Ovary (tissue), 10 donors: ENCODE measurements at regions of chr5 and their contacts with region 1.

Region 1: GRCh38 chr5:62315376-62316175 is 9.6 kb downstream of the KIF2A start:
- DNase-seq: no peak
- H3K4me3 ChIP-seq: no peak overlapping the region
- H3K27ac ChIP-seq: no peak overlapping the region
- H3K4me1 ChIP-seq: no peaks in the 10 kb centered on the region
- H3K27me3 ChIP-seq: no peaks in the 10 kb centered on the region
- CTCF ChIP-seq: no peak
- EP300 ChIP-seq: no peak
- POLR2A ChIP-seq: no peak

Region 2: DNA sequence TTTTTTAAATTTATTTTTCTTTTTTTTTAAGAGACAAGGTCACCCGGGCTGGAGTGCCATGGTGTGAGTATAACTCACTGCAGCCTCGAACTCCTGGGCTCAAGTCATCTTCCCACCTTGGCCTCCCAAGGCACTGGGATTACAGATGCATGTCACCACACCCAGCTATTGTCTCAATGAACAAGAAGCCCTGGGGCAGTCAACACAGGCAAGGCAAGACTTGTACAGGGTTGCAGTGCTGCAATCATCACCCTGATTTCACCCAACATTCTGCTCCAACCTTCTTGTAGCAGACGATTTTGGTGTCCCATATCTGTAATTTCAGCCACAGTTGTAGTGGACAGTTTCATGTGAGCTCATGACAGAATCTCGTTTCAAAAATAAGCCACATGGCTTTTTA is 215.4 kb before region 1 on chr5:
- intact Hi-C with region 1: no loop called
- DNase-seq: no peak
- H3K4me3 ChIP-seq: no peak overlapping the region
- H3K27ac ChIP-seq: no peak overlapping the region
- H3K4me1 ChIP-seq: no peaks in the 10 kb centered on the region
- H3K27me3 ChIP-seq: no peaks in the 10 kb centered on the region
- CTCF ChIP-seq: no peak
- EP300 ChIP-seq: no peak
- POLR2A ChIP-seq: no peak

Region 3: DNA sequence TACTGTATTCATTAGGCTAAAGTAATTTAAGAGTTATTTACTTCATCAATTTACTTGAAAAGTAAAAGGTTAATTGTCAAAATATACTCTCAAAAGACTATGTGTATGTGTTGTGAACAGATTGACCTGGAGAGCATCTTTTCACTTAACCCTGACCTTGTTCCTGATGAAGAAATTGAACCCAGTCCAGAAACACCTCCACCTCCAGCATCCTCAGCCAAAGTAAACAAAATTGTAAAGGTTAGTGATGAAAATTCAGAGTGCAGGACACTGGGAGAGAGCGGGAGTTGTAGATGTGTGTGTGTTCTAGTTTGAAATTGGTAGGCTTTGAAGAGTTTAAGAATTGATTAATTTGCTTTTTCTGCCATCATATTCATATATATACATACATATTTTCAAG is 32.4 kb after region 1 on chr5:
- intact Hi-C with region 1: loop called in 1 of 4 experiments (anchors 2 kb)
- DNase-seq: no peak
- H3K4me3 ChIP-seq: no peak overlapping the region
- H3K27ac ChIP-seq: no peak overlapping the region
- H3K4me1 ChIP-seq: no peaks in the 10 kb centered on the region
- H3K27me3 ChIP-seq: no peaks in the 10 kb centered on the region
- CTCF ChIP-seq: no peak
- EP300 ChIP-seq: no peak
- POLR2A ChIP-seq: no peak